ENCODE measurements at regions of chr16 and their contacts with region 1.

Region 1: DNA sequence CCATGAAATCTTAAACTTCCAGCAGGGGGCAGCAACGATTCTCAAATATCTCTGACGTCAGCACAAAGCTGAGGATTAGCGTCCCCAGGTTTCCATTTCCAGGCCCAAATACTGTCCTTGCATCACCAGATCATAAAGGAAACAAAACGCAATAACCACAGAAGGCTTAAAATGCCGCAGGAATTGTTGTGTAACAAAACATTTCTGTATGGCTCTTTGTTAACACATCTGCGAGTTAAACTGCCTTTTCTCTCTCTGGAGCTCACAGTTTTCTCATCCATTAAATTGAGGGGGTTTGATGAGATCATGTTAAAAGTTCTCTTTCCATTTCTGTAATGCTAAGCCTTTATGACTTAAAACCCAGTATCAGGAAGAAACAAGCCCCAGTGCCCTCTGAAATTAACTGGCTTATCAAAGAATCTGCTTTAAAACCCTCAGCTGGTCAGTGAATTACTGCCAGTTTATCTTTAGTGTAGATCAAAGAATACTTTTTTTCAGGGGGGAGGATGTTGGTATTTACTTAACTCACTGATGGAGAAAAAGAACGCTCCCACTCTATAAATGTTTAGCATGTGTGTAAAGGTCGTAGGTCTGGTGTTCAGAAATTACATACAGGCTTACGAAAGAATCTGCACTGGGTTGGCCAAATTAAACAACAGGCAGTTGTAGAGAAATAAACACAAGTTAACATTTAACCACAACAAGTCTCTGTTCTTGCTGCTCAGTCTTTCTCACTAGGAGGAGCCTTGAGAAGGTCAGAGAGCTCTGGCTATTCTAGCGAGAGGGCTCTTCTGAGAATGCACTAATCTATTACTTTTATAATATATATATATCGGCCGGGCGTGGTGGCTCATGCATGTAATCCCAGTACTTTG is 10.6 kb upstream of the TERF2 start:
- DNase-seq: peak in 1 of 2 donors; percentile 36
- ATAC-seq: peak; percentile 41 to 66 (median 51)
- H3K4me3 ChIP-seq: peak overlapping the region; percentile 11
- H3K27ac ChIP-seq: peak overlapping the region; percentile 79
- H3K4me1 ChIP-seq: peaks cover 30% of the 10 kb centered on the region
- H3K27me3 ChIP-seq: no peaks in the 10 kb centered on the region
- CTCF ChIP-seq: peak; percentile 69

Region 2: DNA sequence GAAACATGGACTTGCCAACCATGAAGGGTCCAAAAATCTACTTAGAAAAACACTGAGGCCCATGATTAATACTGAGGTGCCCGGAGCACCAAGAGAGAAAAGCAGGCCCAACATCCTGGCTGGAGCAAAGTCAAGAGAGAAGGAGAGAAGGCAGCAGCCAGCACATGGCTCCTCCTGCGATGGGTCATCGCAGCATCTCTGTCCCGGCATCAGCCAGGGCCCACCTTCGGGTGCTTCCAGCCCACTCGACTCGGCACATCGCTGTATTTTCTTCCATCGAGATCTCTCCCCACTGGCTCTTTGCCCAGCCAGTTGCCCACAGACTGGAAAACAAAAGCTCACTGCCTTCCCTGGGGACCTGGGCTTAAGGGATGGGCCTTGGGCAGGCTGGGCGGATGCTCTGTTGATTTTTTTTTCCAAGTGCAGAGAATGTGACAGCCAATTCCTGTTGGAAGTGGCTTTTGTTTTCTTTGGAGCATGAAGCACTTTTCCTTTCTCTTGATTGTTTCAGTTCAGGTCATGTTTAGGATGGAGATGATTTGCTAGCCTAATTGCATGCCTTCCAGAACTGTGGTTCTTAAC is 86.1 kb after region 1 on chr16:
- intact Hi-C with region 1: loop called (anchors 5 to 10 kb)
- DNase-seq: peak; percentile 61 to 81
- ATAC-seq: peak; percentile 60 to 76 (median 68)
- H3K4me3 ChIP-seq: peak overlapping the region; percentile 50
- H3K27ac ChIP-seq: peak overlapping the region; percentile 80
- H3K4me1 ChIP-seq: peaks cover 15% of the 10 kb centered on the region
- H3K27me3 ChIP-seq: no peaks in the 10 kb centered on the region
- CTCF ChIP-seq: no peak

Region 3: GRCh38 chr16:69613378-69614154 is 217.1 kb after region 1 on chr16:
- intact Hi-C with region 1: loop called in 1 of 2 experiments (anchors 10 kb)
- DNase-seq: no peak
- ATAC-seq: peak; percentile 80 to 83 (median 83)
- H3K4me3 ChIP-seq: peak overlapping the region; percentile 16
- H3K27ac ChIP-seq: peak overlapping the region; percentile 85
- H3K4me1 ChIP-seq: peaks cover 59% of the 10 kb centered on the region
- H3K27me3 ChIP-seq: no peaks in the 10 kb centered on the region
- CTCF ChIP-seq: no peak

Region 4: GRCh38 chr16:69754469-69755310 is 358.3 kb after region 1 on chr16 and contains the start of gene NOB1:
- intact Hi-C with region 1: loop called (anchors 1 to 10 kb)
- DNase-seq: peak; percentile 94 to 99
- ATAC-seq: peak; percentile 97 to 99 (median 99)
- H3K4me3 ChIP-seq: peak within 1 kb of the TSS; percentile 94
- H3K27ac ChIP-seq: peak within 1 kb of the TSS; percentile 88
- H3K4me1 ChIP-seq: peaks cover 10% of the 10 kb centered on the region
- H3K27me3 ChIP-seq: no peaks in the 10 kb centered on the region
- CTCF ChIP-seq: peak; percentile 97
- total RNA-seq, gene NOB1: 29.3 to 53.5 (median 43.0) TPM

Measured in psoas muscle (tissue), 8 donors.